Heart right ventricle (tissue), 16 donors: ENCODE measurements at regions of chr4 and their contacts with region 1.

Region 1: GRCh38 chr4:110049951-110050925 is 137.6 kb downstream of the EGF start:
- DNase-seq: peak in 1 of 2 donors; percentile 22
- ATAC-seq: peak in 1 of 8 donors; percentile 33
- H3K4me3 ChIP-seq: no peak overlapping the region
- H3K27ac ChIP-seq: no peak overlapping the region
- H3K4me1 ChIP-seq: no peaks in the 10 kb centered on the region
- H3K27me3 ChIP-seq: peaks cover 0 to 5% (median 3%) of the 10 kb centered on the region in 7 donors
- CTCF ChIP-seq: peak; percentile 53 to 89 (median 79)

Region 2: DNA sequence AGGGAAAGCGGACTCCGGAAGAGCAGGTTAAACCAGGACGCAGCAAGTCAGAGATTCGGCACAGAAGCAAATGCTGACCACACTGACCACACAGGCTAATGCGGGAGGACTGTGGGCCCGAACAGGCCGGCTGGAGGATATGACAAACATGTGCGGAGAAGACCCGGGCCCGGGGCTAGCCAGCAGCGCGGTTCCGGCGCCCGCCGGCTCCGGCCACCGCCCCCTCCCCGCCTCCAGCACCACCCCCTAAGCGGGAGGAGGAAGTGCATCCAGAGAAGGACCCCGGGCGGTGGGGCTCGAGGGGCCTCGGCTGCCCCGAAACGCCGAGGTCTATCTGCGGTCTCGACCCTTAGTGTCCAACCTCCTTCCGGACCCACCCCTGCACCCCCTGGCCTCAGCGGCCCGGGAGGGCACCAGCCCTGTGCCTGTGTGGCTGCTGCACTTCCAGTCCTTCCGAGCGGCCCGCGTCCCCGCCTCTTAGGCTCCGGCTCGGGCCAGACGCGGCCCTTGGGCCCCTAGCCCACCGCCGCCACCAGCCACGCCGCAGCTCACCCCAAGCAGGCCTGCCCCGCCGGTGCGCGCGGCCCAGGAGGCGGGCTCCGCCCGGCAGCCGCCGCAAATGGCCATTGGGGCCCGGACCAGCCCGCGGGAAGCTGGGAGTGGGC is 146.1 kb after region 1 on chr4:
- intact Hi-C with region 1: loop called in 2 of 10 experiments (anchors 5 kb)
- DNase-seq: peak; percentile 48 to 52
- ATAC-seq: peak; percentile 68 to 90 (median 78)
- H3K4me3 ChIP-seq: peak overlapping the region; percentile 68 to 95 (median 87)
- H3K27ac ChIP-seq: peak overlapping the region; percentile 39 to 91 (median 87)
- H3K4me1 ChIP-seq: peaks cover 0 to 22% (median 7%) of the 10 kb centered on the region in 9 donors
- H3K27me3 ChIP-seq: peaks cover 0 to 7% (median 0%) of the 10 kb centered on the region in 7 donors
- CTCF ChIP-seq: no peak

Region 3: GRCh38 chr4:110211007-110211769 is 160.9 kb after region 1 on chr4:
- intact Hi-C with region 1: loop called (anchors 1 to 10 kb)
- DNase-seq: no peak
- ATAC-seq: peak in 4 of 8 donors; percentile 46 to 60 (median 56)
- H3K4me3 ChIP-seq: peak overlapping the region in 1 of 10 donors; percentile 22
- H3K27ac ChIP-seq: no peak overlapping the region
- H3K4me1 ChIP-seq: peaks cover 0 to 4% (median 0%) of the 10 kb centered on the region in 9 donors
- H3K27me3 ChIP-seq: peaks cover 0 to 5% (median 0%) of the 10 kb centered on the region in 7 donors
- CTCF ChIP-seq: peak; percentile 49 to 87 (median 77)